A549 (cell line): ENCODE measurements at regions of chr1 and their contacts with region 1.

Region 1: DNA sequence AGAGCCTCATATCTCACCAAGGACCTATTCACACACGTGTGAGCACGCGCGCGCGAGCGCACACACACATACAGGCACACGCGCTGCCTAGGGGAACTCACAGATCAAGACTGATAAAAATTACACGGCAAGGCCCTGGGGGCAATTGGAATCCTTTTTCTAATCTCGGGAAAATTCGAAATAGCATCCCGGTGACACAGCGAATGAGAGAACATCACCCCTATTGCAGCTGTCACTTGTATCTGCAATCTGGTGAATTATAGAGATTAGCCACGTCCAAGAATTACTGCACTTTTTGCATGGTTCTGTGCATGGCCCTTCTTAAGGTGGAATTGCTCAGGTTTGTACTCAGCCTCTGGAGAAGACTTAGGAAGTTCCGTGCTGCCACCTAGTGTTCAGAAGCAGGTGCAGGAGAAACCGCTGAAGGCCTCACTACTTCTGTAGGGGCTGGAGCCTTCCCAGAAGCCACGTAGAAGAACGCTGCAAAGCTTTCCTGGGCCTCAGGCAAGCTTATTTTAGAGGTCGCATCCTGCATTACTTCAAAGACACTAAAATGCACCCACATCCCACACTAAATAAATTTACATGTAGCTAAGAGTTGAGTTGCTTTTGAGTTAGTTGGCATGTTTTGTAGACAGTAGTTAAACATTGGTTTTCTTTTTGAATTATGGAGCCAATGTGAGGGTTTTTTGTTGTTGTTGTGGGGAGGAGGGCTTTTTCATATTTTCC is 229.2 kb upstream of the CAMK1G start:
- DNase-seq: peak; percentile 70 to 89
- ATAC-seq: peak; percentile 99 to 100
- H3K4me3 ChIP-seq: no peak overlapping the region
- H3K27ac ChIP-seq: peak overlapping the region in 1 of 2 experiments; percentile 19; a peak in 1 of 6 replicates
- H3K4me1 ChIP-seq: no peaks in the 10 kb centered on the region
- CTCF ChIP-seq: peak; percentile 79
- EP300 ChIP-seq: no peak
- POLR2A ChIP-seq: no peak
- RAD21 ChIP-seq: peak; percentile 76 to 83

Region 2: DNA sequence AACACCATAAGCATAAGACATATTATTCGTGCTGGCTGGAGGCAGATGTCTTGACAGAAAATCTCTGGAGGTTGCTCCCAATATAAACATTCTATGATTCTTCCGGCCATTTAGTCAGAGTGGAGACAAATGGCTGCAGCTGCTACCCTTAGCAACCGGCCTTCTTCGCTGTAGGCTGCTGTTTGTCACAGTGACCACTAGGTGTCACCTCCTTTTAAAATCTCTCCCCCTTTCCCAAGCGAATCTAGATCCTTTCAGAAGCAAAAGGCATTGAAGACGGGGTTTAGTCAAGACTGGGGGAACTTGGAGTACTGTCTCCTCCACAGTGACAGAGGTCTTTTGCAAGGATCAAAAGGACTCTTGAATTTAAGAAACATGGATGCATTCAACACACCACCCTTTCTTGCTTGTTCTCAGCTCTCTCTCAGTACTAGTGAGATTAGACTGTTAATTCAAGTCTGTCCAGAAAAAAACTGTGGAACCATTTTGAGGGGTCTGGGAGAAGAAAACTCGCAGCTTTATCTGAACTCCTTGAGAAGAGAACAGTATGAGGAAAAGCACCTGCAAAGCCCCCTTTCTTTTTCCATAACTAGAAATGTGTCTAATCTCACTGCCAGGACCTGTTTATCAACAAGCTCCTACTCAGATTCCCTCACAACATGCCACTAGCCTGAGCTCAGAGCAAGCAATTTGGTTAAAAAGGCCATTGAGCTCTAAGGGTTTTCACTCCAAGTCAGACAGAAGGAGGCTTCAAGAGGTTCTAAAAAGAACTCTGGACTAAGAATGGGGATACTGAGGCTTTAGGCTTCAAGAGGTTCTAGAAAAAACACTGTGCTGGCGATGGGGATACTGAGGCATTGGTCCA is 701.7 kb before region 1 on chr1:
- CTCF ChIA-PET with region 1: interaction called, 11 read pairs
- POLR2A ChIA-PET with region 1: no interaction called
- DNase-seq: peak; percentile 18 to 56
- ATAC-seq: peak; percentile 89 to 94
- H3K4me3 ChIP-seq: no peak overlapping the region
- H3K27ac ChIP-seq: no peak overlapping the region
- H3K4me1 ChIP-seq: no peaks in the 10 kb centered on the region
- CTCF ChIP-seq: peak; percentile 76
- EP300 ChIP-seq: no peak
- POLR2A ChIP-seq: no peak
- RAD21 ChIP-seq: peak; percentile 64

Region 3: GRCh38 chr1:209207701-209208286 is 146.5 kb before region 1 on chr1:
- CTCF ChIA-PET with region 1: interaction called, 12 read pairs
- POLR2A ChIA-PET with region 1: no interaction called
- DNase-seq: peak; percentile 38 to 45
- ATAC-seq: peak; percentile 91 to 97
- H3K4me3 ChIP-seq: peak overlapping the region; percentile 22; the same call in 1 of the 3 replicates
- H3K27ac ChIP-seq: peak overlapping the region in 1 of 2 experiments; percentile 63; a peak in 3 of 6 replicates
- H3K4me1 ChIP-seq: no peaks in the 10 kb centered on the region
- CTCF ChIP-seq: peak; percentile 74
- EP300 ChIP-seq: no peak
- POLR2A ChIP-seq: no peak
- RAD21 ChIP-seq: peak; percentile 74 to 84

Region 4: GRCh38 chr1:209268479-209268878 is 85.8 kb before region 1 on chr1:
- CTCF ChIA-PET with region 1: no interaction called
- POLR2A ChIA-PET with region 1: no interaction called
- DNase-seq: no peak
- ATAC-seq: no peak
- H3K4me3 ChIP-seq: no peak overlapping the region
- H3K27ac ChIP-seq: no peak overlapping the region; a peak in 1 of 6 replicates
- H3K4me1 ChIP-seq: peaks cover 21% of the 10 kb centered on the region
- CTCF ChIP-seq: no peak
- EP300 ChIP-seq: no peak
- POLR2A ChIP-seq: no peak
- RAD21 ChIP-seq: no peak

Region 5: GRCh38 chr1:209342441-209343175 is 11.7 kb before region 1 on chr1:
- CTCF ChIA-PET with region 1: interaction called, 24 read pairs
- POLR2A ChIA-PET with region 1: no interaction called
- DNase-seq: no peak
- ATAC-seq: no peak
- H3K4me3 ChIP-seq: no peak overlapping the region
- H3K27ac ChIP-seq: no peak overlapping the region
- H3K4me1 ChIP-seq: no peaks in the 10 kb centered on the region
- CTCF ChIP-seq: no peak
- EP300 ChIP-seq: no peak
- POLR2A ChIP-seq: no peak
- RAD21 ChIP-seq: no peak

Region 6: GRCh38 chr1:209368864-209369598 is 14.8 kb after region 1 on chr1:
- CTCF ChIA-PET with region 1: interaction called, 24 read pairs
- POLR2A ChIA-PET with region 1: no interaction called
- DNase-seq: peak in 1 of 2 experiments; percentile 13
- ATAC-seq: peak; percentile 43 to 45; a peak in 3 of 6 replicates
- H3K4me3 ChIP-seq: no peak overlapping the region
- H3K27ac ChIP-seq: peak overlapping the region in 1 of 2 experiments; percentile 52; a peak in 1 of 6 replicates
- H3K4me1 ChIP-seq: peaks cover 12% of the 10 kb centered on the region
- CTCF ChIP-seq: no peak
- EP300 ChIP-seq: no peak
- POLR2A ChIP-seq: no peak
- RAD21 ChIP-seq: no peak

Region 7: DNA sequence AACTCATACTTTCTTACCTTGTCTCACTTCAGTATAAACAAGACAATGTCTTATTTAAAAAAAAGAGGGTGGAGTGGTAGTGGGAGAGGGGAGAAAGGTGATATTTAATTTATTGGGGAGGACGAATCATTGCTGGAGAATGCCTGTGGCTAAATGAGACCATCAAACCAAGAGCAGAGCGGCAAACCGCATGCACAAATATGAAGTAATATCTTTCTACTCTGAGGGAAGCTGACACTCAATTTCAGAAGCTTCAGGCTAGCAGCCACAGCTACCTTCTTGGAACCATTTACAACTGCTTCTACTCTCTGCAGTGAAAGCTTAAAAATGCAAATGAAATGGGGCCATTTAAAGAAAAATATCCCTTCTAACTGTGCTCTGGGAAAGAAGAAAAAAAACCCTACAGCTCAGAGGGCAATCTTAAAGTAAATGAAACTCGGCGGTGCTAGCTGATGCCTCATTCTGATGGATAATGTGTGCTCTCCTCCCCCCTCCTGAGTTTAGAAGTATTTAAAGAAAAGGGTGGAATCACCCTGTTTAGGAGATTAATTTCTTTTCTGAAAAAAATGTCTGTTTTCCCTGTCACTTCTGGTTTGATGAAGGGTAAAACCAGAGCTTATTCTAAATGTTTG is 51.0 kb after region 1 on chr1:
- CTCF ChIA-PET with region 1: interaction called, 11 read pairs
- POLR2A ChIA-PET with region 1: no interaction called
- DNase-seq: no peak
- ATAC-seq: peak in 1 of 2 experiments; percentile 27; a peak in 1 of 6 replicates
- H3K4me3 ChIP-seq: no peak overlapping the region
- H3K27ac ChIP-seq: peak overlapping the region; percentile 15 to 55; a peak in 3 of 6 replicates
- H3K4me1 ChIP-seq: peaks cover 37% of the 10 kb centered on the region
- CTCF ChIP-seq: no peak
- EP300 ChIP-seq: no peak
- POLR2A ChIP-seq: no peak
- RAD21 ChIP-seq: no peak

Region 8: DNA sequence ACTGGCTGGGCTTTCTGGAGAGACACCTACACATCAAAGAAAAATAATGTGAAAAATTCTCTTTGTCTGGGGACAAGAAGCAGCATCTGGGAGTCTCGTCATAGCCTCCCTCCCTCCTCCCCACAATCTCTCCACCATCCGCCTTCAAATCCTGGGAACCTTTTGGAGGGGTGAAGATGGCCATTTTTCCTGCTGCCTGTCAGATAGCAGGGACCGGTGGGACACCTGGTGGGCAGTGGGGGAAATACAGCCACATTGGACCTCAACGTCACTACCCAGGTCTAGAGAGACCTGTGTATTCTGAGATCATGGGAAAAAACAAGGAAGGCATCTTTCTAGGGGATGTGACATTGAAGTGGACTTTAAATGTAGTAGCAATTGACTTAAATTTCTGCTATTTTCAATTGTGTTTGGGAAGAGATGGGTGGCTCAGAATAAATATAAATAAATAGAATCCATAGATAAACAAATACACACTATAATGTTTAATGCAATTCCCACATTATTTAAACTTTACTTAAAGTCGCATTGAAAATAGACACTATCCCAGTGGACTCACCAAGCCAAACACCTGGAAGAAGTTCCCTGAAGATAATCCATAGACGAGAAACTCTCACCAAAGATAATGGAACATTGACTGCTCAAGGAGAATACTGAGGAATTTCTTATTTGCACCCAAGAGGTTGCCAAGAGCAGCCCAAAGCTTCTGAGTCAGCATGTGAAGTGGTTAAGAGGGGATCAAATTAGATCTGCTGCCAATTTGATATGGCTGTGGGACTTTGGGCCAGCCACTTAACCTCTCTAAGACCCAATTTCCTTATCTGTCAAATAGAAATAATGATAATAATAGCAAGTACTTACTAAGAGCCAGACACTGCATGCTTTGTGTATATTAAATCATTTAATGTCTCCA is 81.6 kb after region 1 on chr1:
- CTCF ChIA-PET with region 1: interaction called, 16 read pairs
- POLR2A ChIA-PET with region 1: no interaction called
- DNase-seq: peak; percentile 77 to 92
- ATAC-seq: peak; percentile 95 to 99
- H3K4me3 ChIP-seq: no peak overlapping the region
- H3K27ac ChIP-seq: peak overlapping the region; percentile 29 to 63; a peak in 5 of 6 replicates
- H3K4me1 ChIP-seq: peaks cover 22% of the 10 kb centered on the region
- CTCF ChIP-seq: peak; percentile 83
- EP300 ChIP-seq: no peak
- POLR2A ChIP-seq: no peak
- RAD21 ChIP-seq: peak; percentile 91 to 92

Region 9: DNA sequence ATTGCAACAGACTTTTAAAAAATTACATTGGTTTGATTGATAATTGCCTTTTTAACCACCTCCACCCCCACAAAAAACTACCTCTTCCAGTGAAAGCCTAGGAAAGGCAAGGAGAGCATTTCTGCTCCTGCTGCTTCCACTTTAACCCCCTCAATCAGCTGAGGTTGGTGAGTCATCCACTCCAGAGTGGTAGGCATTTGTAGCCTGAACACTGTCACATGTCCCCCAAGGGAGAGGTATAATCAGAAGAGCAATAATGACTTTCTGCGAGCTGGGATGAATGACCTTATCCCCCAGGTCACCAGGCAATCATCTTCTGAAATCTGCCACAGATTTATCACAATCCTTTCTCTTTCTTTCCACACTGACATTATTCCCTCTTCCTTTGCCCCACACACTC is 102.6 kb after region 1 on chr1:
- CTCF ChIA-PET with region 1: no interaction called
- POLR2A ChIA-PET with region 1: no interaction called
- DNase-seq: no peak
- ATAC-seq: no peak
- H3K4me3 ChIP-seq: no peak overlapping the region
- H3K27ac ChIP-seq: no peak overlapping the region
- H3K4me1 ChIP-seq: no peaks in the 10 kb centered on the region
- CTCF ChIP-seq: no peak
- EP300 ChIP-seq: no peak
- POLR2A ChIP-seq: no peak
- RAD21 ChIP-seq: no peak